ENCODE measurements at regions of chr4 and their contacts with region 1.

Region 1: DNA sequence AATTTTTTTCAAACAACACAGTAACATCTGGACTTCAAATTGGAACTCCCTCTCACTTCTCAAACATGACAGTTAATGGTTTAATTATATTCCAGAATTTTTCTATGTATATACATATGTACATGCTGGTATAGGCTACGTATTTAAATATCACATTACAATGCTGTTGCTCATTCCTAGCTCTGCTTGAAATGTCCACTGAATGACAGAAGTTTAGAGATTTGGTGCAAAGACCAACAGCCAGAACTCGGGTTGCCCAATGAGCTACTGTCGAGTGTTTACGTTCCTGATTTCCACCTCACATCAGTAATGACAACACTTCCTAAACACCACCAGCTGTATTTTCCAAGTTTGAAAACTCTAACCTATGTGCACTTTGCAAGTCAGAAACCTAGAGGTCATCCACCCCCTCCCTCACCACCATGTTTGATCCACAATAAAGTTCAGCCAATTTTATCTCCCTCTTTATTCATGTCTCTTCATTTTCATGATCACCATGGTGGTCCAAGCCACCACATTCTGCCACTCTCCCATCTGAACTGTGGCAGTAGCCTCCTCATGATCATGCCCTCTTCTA is 49.3 kb upstream of the RPL34 start:
- DNase-seq: no peak
- H3K4me3 Mint-ChIP-seq: no peak overlapping the region
- H3K27ac Mint-ChIP-seq: no peak overlapping the region
- H3K4me1 Mint-ChIP-seq: peaks cover 5% of the 10 kb centered on the region
- H3K27me3 Mint-ChIP-seq: no peaks in the 10 kb centered on the region

Region 2: GRCh38 chr4:108030332-108030731 is 540.7 kb before region 1 on chr4:
- CTCF ChIA-PET with region 1: interaction called, 21 read pairs
- POLR2A ChIA-PET with region 1: interaction called, 3 read pairs
- DNase-seq: peak; percentile 71
- H3K4me3 Mint-ChIP-seq: no peak overlapping the region
- H3K27ac Mint-ChIP-seq: peak overlapping the region; percentile 19
- H3K4me1 Mint-ChIP-seq: peaks cover 25% of the 10 kb centered on the region
- H3K27me3 Mint-ChIP-seq: no peaks in the 10 kb centered on the region

Region 3: GRCh38 chr4:108454227-108454626 is 116.9 kb before region 1 on chr4:
- CTCF ChIA-PET with region 1: no interaction called
- POLR2A ChIA-PET with region 1: no interaction called
- DNase-seq: no peak
- H3K4me3 Mint-ChIP-seq: no peak overlapping the region
- H3K27ac Mint-ChIP-seq: no peak overlapping the region
- H3K4me1 Mint-ChIP-seq: peaks cover 2% of the 10 kb centered on the region
- H3K27me3 Mint-ChIP-seq: peaks cover 13% of the 10 kb centered on the region

Region 4: GRCh38 chr4:108556588-108557200 is 14.4 kb before region 1 on chr4:
- CTCF ChIA-PET with region 1: no interaction called
- POLR2A ChIA-PET with region 1: no interaction called
- DNase-seq: no peak
- H3K4me3 Mint-ChIP-seq: no peak overlapping the region
- H3K27ac Mint-ChIP-seq: no peak overlapping the region
- H3K4me1 Mint-ChIP-seq: no peaks in the 10 kb centered on the region
- H3K27me3 Mint-ChIP-seq: peaks cover 1% of the 10 kb centered on the region

Region 5: GRCh38 chr4:108581083-108581482 is 10.0 kb after region 1 on chr4:
- CTCF ChIA-PET with region 1: interaction called, 25 read pairs
- POLR2A ChIA-PET with region 1: no interaction called
- DNase-seq: no peak
- H3K4me3 Mint-ChIP-seq: no peak overlapping the region
- H3K27ac Mint-ChIP-seq: no peak overlapping the region
- H3K4me1 Mint-ChIP-seq: no peaks in the 10 kb centered on the region
- H3K27me3 Mint-ChIP-seq: no peaks in the 10 kb centered on the region

Region 6: GRCh38 chr4:108762559-108763225 is 191.6 kb after region 1 on chr4 and contains the start of gene ETNPPL:
- CTCF ChIA-PET with region 1: no interaction called
- POLR2A ChIA-PET with region 1: no interaction called
- DNase-seq: peak; percentile 26
- H3K4me3 Mint-ChIP-seq: peak within 1 kb of the TSS; percentile 64
- H3K27ac Mint-ChIP-seq: no peak within 1 kb of the TSS
- H3K4me1 Mint-ChIP-seq: peaks cover 14% of the 10 kb centered on the region
- H3K27me3 Mint-ChIP-seq: peaks cover 42% of the 10 kb centered on the region
- total RNA-seq, gene ETNPPL: not detected